Astrocyte of the cerebellum (primary cell): ENCODE measurements at regions of chr2 and their contacts with region 1.

Region 1: DNA sequence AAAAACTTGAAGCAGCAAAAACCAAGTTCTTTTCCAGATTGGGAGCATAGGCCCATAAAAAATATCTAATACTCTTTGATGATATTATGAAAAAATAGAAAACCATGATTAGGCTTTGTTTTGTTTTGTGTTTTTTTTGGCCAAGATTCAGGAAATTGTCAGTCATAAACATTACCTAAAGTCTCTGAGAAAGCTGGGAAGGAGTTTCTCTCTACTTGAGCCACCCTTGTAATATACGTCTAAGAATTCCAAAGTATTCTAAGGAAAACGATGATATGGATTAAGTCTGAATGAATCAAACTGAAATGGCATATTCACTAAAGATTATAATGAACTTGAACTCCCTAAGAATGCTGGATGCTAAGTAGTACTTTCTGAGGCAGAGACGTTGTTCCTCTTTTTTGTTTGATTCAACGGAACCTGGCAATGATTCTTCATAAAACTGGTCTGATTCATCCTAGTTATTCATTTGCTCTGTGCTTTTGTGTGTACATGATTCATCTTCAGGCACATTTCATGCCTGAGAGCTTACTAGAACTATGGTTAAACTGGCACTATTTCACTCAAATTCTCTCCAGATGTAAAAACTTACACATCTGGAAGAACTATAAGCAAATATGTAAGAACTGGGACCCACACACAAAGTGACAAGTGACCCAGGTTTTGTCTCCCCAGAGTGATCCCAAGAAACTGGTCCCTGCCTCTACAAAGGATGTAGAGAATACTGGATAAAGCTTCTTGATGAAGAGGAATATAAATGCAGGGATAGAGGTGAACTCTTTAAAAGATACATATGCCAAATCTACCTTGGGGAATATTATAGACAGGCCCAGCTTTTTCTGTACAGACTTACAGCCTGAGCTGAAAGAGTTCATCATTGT is 159.7 kb downstream of the DOCK10 start:
- DNase-seq: peak; percentile 86
- H3K4me3 ChIP-seq: no peak overlapping the region
- CTCF ChIP-seq: no peak

Region 2: DNA sequence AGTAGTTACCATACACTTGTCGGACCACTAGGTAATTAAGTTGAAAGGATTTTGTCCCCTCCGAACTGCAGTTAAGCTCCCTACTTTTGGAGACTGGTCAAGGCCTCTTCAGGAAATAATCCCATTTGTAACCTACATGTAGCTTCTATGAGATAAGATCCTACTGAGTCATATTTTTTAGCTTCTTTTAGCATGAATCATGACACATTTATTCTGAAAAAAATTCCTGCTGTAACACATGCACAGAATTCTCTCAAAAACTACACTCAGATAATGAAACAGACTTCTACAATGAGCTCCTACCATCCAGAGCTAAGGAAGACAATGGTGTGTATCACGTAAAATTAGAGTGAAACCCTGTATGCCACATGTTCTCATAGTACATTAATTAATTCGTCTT is 65.7 kb before region 1 on chr2:
- in situ Hi-C with region 1: no loop called
- DNase-seq: peak; percentile 23
- H3K4me3 ChIP-seq: no peak overlapping the region
- CTCF ChIP-seq: no peak

Region 3: GRCh38 chr2:224922142-224922727 is 39.7 kb after region 1 on chr2:
- in situ Hi-C with region 1: loop called (anchors 5 kb)
- DNase-seq: peak; percentile 58
- H3K4me3 ChIP-seq: no peak overlapping the region
- CTCF ChIP-seq: no peak

Region 4: DNA sequence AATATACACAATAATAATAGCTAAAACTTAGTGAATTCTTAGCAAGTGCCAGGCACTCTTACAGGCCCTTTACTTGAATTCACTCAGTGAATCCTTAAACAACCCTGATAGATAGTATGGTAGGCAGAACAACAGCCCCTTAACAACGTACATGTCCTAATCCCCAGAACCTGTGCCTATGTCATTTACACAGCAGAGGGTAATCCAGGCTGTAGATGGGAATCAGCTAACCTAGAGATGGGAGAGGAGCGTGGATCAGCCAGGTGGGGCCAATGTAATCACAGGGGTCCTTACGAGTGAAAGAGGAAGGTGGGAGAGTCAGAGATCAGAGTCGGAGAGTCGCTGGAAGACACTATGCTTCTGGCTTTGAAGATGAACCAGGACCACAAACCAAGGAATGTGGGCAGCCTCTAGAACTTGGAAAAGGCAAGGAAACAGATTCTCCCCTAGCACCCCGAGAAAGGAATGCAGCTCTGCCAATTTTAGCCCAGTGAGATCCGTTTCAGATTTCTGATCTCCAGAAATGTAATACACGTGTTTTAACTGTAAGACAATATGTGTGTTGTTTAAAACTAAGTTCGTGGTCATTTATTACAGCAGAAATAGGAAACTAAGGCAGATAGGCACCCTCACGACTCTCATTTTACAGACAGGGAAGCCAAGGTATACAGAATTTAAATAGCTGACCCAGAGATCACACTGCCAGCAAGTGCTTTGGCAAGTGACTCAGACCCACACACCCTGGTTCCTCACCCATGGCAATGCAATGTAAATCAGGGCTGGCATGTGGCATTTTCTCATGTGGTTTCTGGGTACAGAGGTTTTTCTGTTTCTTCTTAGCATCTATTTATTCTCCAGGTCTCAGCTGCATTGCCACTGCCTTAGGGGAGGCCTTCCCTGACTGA is 90.8 kb after region 1 on chr2:
- in situ Hi-C with region 1: loop called (anchors 5 kb)
- DNase-seq: no peak
- H3K4me3 ChIP-seq: no peak overlapping the region
- CTCF ChIP-seq: no peak